OCI-LY7 (cell line): ENCODE measurements at regions of chr2 and their contacts with region 1.

Region 1: GRCh38 chr2:186181625-186182024 is 304.4 kb upstream of the ZC3H15 start:
- DNase-seq: no peak
- H3K4me3 ChIP-seq: no peak overlapping the region
- H3K27ac ChIP-seq: no peak overlapping the region
- H3K4me1 ChIP-seq: no peaks in the 10 kb centered on the region
- CTCF ChIP-seq: no peak

Region 2: DNA sequence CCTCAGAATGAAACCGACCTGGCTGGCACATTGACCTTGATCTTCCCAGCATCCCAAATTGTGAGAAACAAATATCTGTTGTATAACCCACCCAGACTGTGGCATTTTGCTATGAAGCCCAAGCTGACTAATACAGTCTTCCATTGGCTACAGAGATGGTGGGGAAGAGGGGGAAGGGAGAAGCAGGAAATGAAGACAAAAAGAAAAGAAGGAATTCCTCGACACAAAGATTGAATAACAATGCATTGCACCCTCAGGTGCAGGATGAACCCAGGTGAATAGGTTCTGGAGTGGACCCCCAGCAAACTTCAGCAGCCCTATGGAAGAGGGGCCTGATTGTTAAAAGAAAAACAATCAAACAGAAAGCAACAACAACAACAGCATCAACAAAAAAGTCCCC is 172.3 kb before region 1 on chr2:
- CTCF ChIA-PET with region 1: no interaction called
- POLR2A ChIA-PET with region 1: no interaction called
- intact Hi-C with region 1: no loop called
- DNase-seq: no peak
- H3K4me3 ChIP-seq: no peak overlapping the region
- H3K27ac ChIP-seq: no peak overlapping the region
- H3K4me1 ChIP-seq: no peaks in the 10 kb centered on the region
- CTCF ChIP-seq: no peak

Region 3: DNA sequence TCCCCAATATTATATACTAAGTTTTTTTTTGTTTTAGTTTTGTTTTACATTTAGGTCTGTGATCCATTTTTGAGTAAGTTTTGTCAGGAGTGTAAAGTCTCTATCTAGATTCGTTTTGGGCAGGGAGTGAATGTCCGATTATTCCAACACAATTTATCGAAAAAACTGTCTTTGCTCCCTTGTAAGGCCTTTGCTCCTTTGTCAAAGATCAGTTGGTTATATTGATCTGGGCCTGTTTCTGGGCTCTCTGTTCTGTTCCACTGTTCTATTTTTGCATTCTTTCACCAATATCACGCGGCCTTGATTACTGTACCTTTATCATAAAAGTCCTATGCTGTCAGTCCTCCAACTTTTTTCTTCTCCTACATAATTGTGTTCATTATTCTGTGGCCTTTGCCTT is 27.9 kb after region 1 on chr2:
- CTCF ChIA-PET with region 1: no interaction called
- POLR2A ChIA-PET with region 1: interaction called, 3 read pairs
- intact Hi-C with region 1: loop called (anchors 1 kb)
- DNase-seq: no peak
- H3K4me3 ChIP-seq: no peak overlapping the region
- H3K27ac ChIP-seq: no peak overlapping the region
- H3K4me1 ChIP-seq: no peaks in the 10 kb centered on the region
- CTCF ChIP-seq: no peak

Region 4: GRCh38 chr2:186422226-186422625 is 240.6 kb after region 1 on chr2:
- CTCF ChIA-PET with region 1: no interaction called
- POLR2A ChIA-PET with region 1: no interaction called
- intact Hi-C with region 1: no loop called
- DNase-seq: no peak
- H3K4me3 ChIP-seq: no peak overlapping the region
- H3K27ac ChIP-seq: no peak overlapping the region
- H3K4me1 ChIP-seq: peaks cover 7% of the 10 kb centered on the region
- CTCF ChIP-seq: no peak